ENCODE measurements at regions of chr22 and their contacts with region 1.

Region 1: DNA sequence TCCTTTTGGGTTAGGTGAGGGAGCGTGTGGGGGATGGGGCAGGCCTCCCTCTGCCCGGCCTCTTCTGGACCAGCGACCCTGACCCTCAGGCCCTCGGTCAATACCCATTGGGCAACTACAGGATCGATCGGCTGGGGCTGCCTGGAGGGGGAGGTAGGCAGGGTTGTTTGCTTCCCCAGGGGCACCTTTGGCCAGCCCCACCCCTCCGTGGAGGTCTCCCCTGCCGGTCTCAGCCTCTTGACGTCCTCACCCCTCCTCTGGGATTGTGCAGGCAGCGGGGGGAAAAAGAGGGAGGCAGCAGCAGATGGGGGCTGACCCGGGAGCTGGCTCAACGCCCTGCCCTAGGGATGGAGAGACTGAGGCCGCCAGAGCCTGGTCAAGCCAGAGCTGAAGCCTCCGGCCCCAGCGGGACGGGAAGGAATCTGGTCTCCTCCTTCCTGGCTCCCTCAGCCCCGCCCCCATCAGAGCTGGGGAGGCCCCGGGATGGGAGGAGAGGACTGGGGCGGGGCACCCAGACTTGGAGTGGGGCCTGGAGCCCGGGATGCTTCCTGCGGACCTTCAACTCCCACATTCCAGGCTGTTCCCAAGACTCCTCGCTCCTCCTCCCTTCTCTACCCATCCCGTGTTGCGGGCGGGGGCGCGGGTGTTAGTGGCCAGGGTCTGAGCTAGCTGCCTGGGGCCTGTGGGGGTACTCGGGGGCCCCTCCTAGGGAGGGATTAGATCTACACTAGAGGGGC is 14.4 kb upstream of the CDC42EP1 start:
- DNase-seq: peak in 16 of 42 donors; percentile 35 to 71 (median 54)

Region 2: DNA sequence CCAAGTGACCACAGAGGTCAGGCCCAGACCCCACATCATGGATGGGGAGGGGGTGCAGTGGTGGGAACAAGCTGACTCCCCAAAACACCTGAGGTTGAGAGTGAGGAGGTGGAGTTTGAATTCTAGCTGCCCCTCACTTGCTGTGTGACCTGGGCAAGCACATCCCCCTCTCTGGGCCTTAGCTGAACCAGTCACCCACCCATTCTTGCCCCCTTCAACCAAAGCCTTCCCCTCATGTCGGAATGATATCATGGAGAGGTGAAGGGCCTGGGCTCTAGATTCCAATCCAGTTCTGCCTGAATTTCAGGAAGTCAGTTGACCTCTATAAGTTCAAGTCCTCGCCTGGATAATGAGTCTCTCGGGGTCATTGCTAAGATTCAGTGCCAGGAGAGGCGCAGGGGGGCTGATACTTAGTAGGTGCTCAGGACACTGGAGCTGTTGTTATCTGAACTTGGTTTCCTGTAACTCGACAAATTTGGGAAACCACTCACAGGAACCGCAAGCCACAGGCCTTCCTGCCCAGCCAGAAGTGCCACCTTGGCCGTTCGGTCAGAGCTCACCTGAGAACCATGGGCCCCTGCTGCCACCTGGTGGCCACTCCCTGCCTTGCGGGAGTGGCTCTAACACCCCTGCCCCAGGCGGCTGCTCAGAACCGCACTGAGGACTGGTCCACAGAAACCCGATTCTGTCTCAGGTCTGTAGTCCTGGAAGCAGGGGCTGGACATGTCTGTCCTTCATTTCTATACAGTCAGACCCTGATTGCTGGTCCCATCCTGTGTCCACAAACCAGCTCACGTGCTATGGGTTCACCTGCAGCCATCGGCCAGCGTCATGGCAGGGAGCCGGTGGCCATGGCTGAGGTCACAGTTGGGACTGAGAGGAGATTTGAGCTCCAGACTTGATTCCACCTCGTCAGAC is 21.3 kb after region 1 on chr22:
- intact Hi-C with region 1: loop called (anchors 2 kb)
- DNase-seq: peak; percentile 65 to 93 (median 82)

Region 3: DNA sequence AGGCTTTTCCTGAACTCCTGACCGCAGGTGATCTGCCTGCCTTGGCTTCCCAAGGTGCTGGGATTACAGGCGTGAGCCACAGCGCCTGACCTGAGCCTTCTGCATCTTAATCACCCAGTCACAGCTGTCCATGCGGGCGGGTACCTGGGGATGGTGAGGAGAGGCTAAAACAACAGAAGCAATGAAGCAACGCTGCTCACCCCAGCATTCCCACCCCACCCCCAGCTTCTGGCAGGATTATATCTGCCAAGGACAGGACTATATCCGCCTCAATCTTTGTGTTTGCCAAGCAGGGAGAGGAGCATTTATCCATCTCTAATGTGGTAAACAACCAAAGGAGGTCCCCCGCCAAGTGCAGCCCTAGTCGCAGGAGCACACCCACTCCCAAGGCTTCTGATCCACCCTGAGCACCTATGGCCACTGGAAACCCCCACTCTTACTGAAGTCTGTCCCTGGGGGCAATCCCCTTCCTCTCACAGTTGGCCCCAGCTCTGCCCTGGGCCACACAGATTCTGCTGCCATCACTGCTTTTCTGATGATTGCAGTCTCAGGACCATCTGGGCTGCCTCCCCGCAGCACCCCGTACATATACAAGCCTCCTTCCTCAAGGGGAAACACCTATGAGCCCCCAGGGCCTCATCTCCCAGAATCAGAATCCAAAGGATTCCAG is 42.8 kb after region 1 on chr22:
- intact Hi-C with region 1: no loop called
- DNase-seq: no peak